Posterior vena cava (tissue), 2 donors: ENCODE measurements at regions of chr4 and their contacts with region 1.

Region 1: DNA sequence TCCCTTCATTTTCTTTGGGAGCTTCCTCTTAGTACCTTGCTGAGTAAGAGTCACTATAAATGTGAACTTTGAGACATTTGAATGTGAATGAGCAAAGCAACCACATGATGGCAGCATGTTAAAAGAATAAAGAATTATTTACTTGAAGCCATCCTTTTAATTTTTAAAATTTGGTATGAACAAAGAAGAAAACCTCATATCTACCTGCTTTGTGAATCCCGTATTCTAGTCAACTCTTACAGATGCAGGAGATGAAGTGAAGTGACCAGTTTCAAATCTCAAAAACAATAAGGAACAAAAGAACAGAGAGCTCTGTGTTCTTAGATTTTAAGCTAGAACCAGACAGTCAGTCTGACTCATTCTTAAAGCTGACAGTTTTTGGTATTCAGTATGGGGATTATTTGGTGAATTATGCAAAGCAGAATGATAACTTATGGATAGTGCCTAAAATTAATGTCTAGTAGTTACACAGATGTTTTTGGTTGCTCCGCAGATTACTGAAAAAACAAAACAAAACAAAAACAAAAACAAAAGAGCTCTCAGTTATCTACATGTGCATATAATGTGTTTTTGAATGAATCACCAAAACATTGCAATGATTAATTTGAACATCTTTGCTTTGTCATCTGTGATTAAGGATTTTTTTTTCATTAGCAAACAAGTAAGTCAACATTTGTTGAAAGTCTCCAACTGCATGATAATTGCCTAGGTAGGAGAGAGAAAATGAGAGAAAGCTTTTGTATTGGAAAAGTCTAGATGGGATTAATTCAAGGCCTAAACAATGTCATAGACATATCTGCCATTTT is 48.2 kb upstream of the H2AZ1 start:
- DNase-seq: no peak

Region 2: DNA sequence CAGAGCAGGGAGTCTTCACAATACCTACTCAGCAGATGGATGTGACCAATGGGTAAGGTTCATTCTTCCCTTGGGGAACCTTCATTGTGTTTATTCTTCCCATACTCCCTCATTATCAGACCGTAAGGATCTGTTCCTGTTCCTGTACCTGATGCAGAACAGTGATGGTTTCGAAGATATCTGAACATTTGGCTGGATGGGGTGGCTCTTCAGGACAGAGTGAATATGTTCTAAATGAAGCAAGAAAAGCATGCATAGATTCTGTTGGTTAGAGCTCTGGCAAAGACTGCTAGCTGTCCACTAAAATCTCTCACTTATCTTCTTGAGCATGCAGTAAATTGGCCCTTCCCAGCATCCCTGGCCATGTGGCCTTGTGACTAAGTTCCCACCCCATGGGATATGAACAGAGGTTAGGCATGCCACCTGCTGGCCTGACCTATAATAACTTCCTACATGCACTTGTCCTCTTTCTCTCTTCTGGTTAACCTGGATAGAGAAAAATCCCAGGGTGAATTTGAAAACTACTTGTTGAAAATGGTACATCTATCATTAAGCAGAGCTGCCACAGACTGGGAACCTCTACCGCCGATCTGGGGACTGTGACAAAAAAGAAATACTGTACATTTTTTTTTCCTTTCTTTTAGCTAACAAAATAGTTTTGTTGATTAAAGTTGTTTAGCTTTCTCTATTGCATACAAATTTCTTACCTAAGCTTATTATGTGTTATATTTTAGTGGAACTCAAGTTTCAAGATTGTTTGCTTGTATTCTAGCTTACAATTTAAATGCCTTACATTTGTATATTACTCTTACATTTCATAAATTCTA is 1732.2 kb after region 1 on chr4:
- intact Hi-C with region 1: loop called in 1 of 2 experiments (anchors 5 kb)
- DNase-seq: peak; percentile 82